ENCODE measurements at regions of chr5 and their contacts with region 1.

Region 1: GRCh38 chr5:148957591-148958202 is 105.2 kb downstream of the SH3TC2 start:
- DNase-seq: peak in 29 of 35 experiments; percentile 9 to 67 (median 32)
- ATAC-seq: peak in 3 of 4 experiments; percentile 30 to 59 (median 44)
- H3K4me3 ChIP-seq: no peak overlapping the region
- H3K4me3 Mint-ChIP-seq: no peak overlapping the region
- H3K27ac ChIP-seq: no peak overlapping the region
- H3K27ac Mint-ChIP-seq: no peak overlapping the region
- H3K4me1 ChIP-seq: peaks cover 0 to 10% of the 10 kb centered on the region in 2 experiments
- H3K4me1 Mint-ChIP-seq: no peaks in the 10 kb centered on the region
- H3K27me3 ChIP-seq: peaks cover 0 to 3% of the 10 kb centered on the region in 2 experiments
- H3K27me3 Mint-ChIP-seq: peaks cover 3 to 8% of the 10 kb centered on the region in 2 donors

Region 2: DNA sequence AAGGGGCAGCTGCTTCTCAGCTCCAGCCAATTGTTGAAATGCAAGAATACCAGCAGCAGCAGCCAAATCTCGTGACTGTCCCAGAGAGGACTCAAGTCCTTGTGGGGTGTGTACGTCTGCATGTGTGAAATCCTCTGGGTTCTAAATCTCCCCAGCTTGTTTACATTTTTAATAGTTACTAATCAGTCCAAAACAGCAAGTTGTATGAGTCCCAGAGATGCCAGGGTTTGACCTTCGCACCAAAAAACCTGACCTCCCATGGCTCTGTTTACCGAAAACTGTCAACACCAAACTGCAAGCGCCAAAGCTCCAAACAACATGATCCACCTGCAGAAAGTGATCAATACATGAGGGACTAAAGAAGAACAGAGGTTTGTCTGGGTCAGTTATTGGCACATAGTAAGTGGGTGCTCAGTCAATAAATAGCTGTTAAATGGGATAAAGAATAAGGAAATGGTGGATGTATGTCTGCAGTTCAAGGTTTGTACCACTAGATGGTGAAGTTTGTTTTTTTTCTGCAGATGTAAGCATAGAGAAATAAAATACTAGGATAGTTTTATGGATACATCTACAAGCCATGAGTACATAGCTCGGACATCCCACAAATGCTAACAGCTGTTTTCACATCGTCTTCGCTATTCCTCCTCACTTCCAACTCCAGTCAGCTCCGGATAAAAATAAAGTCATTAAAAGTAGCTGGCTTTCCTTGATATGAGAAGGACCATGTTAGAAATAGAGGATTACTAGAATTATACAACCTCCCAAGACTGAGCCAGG is 216.5 kb before region 1 on chr5:
- CTCF ChIA-PET with region 1: interaction called, 13 to 47 read pairs
- POLR2A ChIA-PET with region 1: no interaction called
- DNase-seq: peak in 2 of 35 experiments; percentile 20 to 70
- ATAC-seq: no peak
- H3K4me3 ChIP-seq: no peak overlapping the region
- H3K4me3 Mint-ChIP-seq: no peak overlapping the region
- H3K27ac ChIP-seq: no peak overlapping the region
- H3K27ac Mint-ChIP-seq: no peak overlapping the region
- H3K4me1 ChIP-seq: no peaks in the 10 kb centered on the region
- H3K4me1 Mint-ChIP-seq: no peaks in the 10 kb centered on the region
- H3K27me3 ChIP-seq: peaks cover 0 to 2% of the 10 kb centered on the region in 2 experiments
- H3K27me3 Mint-ChIP-seq: peaks cover 14 to 17% of the 10 kb centered on the region in 2 donors

Region 3: DNA sequence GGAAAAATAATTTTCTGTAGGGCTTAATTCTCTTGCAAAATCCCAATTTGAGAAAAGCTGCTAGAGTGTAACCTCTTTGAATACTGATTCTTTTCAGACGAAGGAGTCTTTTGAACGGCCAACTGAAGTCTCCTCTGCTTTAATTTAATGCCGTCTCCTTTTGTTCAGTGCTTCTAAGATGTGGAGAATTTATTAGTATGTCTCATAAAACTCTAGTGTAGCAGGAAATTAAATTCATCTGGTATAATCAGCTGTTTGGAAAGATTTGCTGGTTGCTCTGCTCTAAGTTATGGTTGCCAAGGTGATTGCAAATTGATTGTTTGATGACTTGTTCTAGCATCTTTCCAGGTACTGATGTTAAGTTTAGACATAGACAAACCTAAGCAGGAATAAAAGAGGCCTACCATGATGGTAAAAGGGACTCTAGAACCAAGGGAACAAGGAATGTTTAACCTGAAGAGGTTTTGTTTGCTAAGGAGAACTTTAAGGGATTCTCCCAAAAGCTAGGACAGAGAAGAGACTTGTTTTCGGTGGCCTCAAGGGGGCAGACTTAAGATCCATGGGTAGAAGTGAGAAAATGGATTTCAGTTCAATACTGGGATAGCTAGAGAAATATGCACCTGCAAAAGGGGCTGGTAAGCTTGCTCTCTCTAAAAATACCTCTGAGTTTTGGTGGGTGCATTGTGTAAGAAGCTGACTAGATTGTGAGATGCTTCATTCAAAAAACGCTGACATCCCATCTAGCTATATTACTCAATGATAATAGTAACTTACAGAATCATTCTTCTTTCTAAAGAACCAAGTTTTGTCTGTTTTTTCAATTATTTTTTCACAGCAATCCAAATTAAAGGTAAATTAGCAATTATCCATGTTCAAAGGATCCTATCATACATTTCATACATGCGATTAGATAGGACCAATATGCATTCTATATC is 137.0 kb before region 1 on chr5:
- CTCF ChIA-PET with region 1: interaction called, 3 to 28 read pairs
- POLR2A ChIA-PET with region 1: no interaction called
- DNase-seq: peak in 4 of 35 experiments; percentile 18 to 65 (median 25)
- ATAC-seq: peak in 2 of 4 experiments; percentile 43 to 48
- H3K4me3 ChIP-seq: no peak overlapping the region
- H3K4me3 Mint-ChIP-seq: no peak overlapping the region
- H3K27ac ChIP-seq: no peak overlapping the region
- H3K27ac Mint-ChIP-seq: no peak overlapping the region
- H3K4me1 ChIP-seq: peaks cover 2 to 6% of the 10 kb centered on the region in 2 experiments
- H3K4me1 Mint-ChIP-seq: peaks cover 4 to 16% (median 6%) of the 10 kb centered on the region in 3 donors
- H3K27me3 ChIP-seq: peaks cover 0 to under 1% of the 10 kb centered on the region in 2 experiments
- H3K27me3 Mint-ChIP-seq: peaks cover 0 to 4% of the 10 kb centered on the region in 2 donors

Region 4: GRCh38 chr5:148831590-148832565 is 125.8 kb before region 1 on chr5:
- CTCF ChIA-PET with region 1: interaction called in 1 of 2 experiments, 10 read pairs
- POLR2A ChIA-PET with region 1: no interaction called
- DNase-seq: no peak
- ATAC-seq: peak in 1 of 4 experiments; percentile 28
- H3K4me3 ChIP-seq: peak overlapping the region in 1 of 2 donors; percentile 76
- H3K4me3 Mint-ChIP-seq: peak overlapping the region; percentile 24 to 66 (median 25)
- H3K27ac ChIP-seq: peak overlapping the region; percentile 33
- H3K27ac Mint-ChIP-seq: peak overlapping the region; percentile 62 to 85
- H3K4me1 ChIP-seq: peaks cover 0 to 22% of the 10 kb centered on the region in 2 experiments
- H3K4me1 Mint-ChIP-seq: peaks cover 43 to 87% (median 73%) of the 10 kb centered on the region in 3 donors
- H3K27me3 ChIP-seq: no peaks in the 10 kb centered on the region
- H3K27me3 Mint-ChIP-seq: peaks cover 0 to 10% of the 10 kb centered on the region in 2 donors

Region 5: DNA sequence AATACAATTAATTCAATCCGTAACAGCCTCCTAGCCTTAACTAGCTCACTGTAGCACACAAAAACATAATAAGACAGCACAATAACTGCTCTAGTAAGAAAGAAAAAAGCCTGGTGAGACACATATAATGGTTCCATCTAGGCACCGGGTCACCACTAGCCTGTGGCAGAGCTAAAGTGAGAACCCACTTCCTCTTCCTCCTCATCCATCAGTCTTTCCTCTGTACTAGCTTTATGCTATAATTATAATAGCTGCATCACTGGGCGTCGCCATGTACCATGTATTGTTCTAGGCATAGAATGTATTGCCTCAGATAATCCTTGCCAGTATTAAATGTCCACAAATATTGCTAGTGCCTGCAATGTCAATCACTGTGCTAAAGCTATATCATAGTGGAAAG is 108.2 kb before region 1 on chr5:
- CTCF ChIA-PET with region 1: interaction called in 1 of 2 experiments, 15 read pairs
- POLR2A ChIA-PET with region 1: interaction called in 1 of 2 experiments, 3 read pairs
- DNase-seq: peak in 29 of 35 experiments; percentile 9 to 70 (median 38)
- ATAC-seq: peak; percentile 76 to 86 (median 84)
- H3K4me3 ChIP-seq: no peak overlapping the region
- H3K4me3 Mint-ChIP-seq: peak overlapping the region in 1 of 3 donors; percentile 76
- H3K27ac ChIP-seq: peak overlapping the region; percentile 86
- H3K27ac Mint-ChIP-seq: peak overlapping the region; percentile 83 to 95
- H3K4me1 ChIP-seq: peaks cover 16 to 67% of the 10 kb centered on the region in 2 experiments
- H3K4me1 Mint-ChIP-seq: peaks cover 32 to 84% (median 69%) of the 10 kb centered on the region in 3 donors
- H3K27me3 ChIP-seq: no peaks in the 10 kb centered on the region
- H3K27me3 Mint-ChIP-seq: peaks cover 0 to 4% of the 10 kb centered on the region in 2 donors

Region 6: DNA sequence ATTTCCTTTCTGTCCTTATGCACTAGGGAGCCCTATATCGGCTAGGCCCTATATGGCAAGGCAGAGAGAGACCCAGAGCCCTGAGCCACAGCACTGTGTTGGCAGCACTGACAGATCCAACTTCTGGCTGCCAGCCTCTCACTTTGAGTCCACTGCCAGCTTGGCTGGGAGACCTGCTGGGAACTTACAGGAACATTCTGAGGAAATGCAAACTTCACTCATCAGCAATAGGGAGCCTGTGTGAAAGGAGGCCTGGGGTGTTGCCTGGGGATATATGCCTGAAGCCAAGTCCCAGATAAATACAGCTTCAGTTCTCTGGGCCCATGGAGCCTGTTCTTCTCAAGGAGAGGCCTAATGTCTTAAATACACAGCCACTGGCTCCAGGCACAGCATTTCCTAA is 53.3 kb before region 1 on chr5:
- CTCF ChIA-PET with region 1: no interaction called
- POLR2A ChIA-PET with region 1: no interaction called
- DNase-seq: no peak
- ATAC-seq: no peak
- H3K4me3 ChIP-seq: no peak overlapping the region
- H3K4me3 Mint-ChIP-seq: no peak overlapping the region
- H3K27ac ChIP-seq: no peak overlapping the region
- H3K27ac Mint-ChIP-seq: no peak overlapping the region
- H3K4me1 ChIP-seq: no peaks in the 10 kb centered on the region
- H3K4me1 Mint-ChIP-seq: peaks cover 0 to 6% (median 5%) of the 10 kb centered on the region in 3 donors
- H3K27me3 ChIP-seq: no peaks in the 10 kb centered on the region
- H3K27me3 Mint-ChIP-seq: no peaks in the 10 kb centered on the region